Colonic mucosa (tissue), 4 donors: ENCODE measurements at regions of chr7 and their contacts with region 1.

Region 1: GRCh38 chr7:40629891-40630290 is 495.1 kb downstream of the SUGCT start:
- DNase-seq: no peak
- H3K4me3 ChIP-seq: no peak overlapping the region
- H3K27ac ChIP-seq: no peak overlapping the region
- H3K4me1 ChIP-seq: no peaks in the 10 kb centered on the region
- H3K27me3 ChIP-seq: no peaks in the 10 kb centered on the region
- CTCF ChIP-seq: no peak

Region 2: DNA sequence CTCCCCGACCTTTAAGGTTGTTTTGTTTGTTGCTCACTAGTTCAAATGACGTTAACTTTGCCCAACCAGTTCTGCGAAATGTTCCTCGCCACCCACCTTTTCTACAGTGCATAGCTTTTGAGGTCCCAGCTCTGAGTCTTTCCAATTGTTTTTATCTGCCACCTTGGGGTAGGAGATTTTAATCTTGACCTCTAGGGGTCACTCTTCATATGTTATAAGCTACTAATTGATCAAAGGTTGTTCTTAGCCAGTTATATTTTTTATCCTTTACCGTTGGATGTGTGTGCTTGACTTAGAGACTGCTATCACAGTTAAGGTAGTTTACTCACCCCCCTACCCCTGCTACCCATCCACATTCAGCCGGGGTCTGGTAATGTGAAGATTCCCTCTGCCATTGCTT is 122.7 kb before region 1 on chr7:
- intact Hi-C with region 1: loop called (anchors 10 kb)
- DNase-seq: no peak
- H3K4me3 ChIP-seq: no peak overlapping the region
- H3K27ac ChIP-seq: no peak overlapping the region
- H3K4me1 ChIP-seq: no peaks in the 10 kb centered on the region
- H3K27me3 ChIP-seq: no peaks in the 10 kb centered on the region
- CTCF ChIP-seq: peak; percentile 41

Region 3: GRCh38 chr7:40519009-40519408 is 110.9 kb before region 1 on chr7:
- intact Hi-C with region 1: no loop called
- DNase-seq: no peak
- H3K4me3 ChIP-seq: no peak overlapping the region
- H3K27ac ChIP-seq: no peak overlapping the region
- H3K4me1 ChIP-seq: no peaks in the 10 kb centered on the region
- H3K27me3 ChIP-seq: no peaks in the 10 kb centered on the region
- CTCF ChIP-seq: no peak

Region 4: DNA sequence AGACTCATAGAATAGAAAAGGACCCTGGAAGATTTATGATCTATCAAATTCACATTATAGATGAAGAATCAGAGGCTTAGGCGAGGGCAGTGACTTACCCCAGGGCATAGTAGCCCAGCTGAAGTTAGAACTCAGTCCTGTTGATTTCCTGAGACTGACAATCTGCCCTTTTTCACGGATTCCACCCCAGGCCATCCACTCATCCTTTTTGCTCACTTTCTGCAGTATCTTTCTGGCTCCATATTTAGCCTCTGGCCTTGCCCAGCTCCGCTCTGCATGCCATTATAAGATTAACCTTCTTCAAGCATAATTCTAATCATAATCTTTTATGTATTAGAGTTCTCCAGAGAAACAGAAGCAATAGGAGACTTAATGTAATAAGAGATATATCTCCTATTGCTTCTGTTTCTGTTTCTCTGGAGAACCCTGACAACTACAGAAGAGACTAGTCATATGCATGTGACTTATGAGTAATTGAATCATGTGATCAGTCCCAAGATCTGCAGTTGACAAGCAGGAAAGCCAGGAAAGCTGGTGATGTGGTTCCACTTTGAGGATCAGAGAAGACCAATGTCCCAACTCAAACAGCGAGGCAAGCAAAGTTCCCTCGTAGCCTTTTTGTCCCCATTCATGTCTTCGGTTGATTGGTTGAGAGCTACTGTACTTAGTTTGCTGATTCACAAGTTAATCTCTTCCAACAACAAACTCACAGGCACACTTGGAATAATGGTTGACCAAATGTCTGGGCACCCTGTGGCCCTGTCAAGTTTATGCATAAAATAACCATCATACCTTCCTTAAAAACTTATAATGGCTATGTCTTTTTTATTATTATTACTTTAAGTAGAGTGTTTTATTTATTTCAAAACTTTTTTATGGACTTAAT is 83.0 kb before region 1 on chr7:
- intact Hi-C with region 1: no loop called
- DNase-seq: no peak
- H3K4me3 ChIP-seq: no peak overlapping the region
- H3K27ac ChIP-seq: no peak overlapping the region
- H3K4me1 ChIP-seq: no peaks in the 10 kb centered on the region
- H3K27me3 ChIP-seq: no peaks in the 10 kb centered on the region
- CTCF ChIP-seq: no peak